Activated T-helper 1 cell treated with anti-CD3 and anti-CD28 coated beads, Interleukin-12 subunit alpha, Interleukin-12 subunit beta, Interleukin-2, Interleukin-4 antibody, amounts not matched to agents 30 ng/mL and 10 ng/mL and 1 ng/mL, durations not matched to agents 14 hours and 24 hours and 36 hours (primary cell): ENCODE measurements at regions of chr10 and their contacts with region 1.

Region 1: GRCh38 chr10:44878706-44879530 is 32.2 kb upstream of the TMEM72 start:
- DNase-seq: peak; percentile 78
- H3K4me3 Mint-ChIP-seq: peak overlapping the region; percentile 82
- H3K27ac Mint-ChIP-seq: peak overlapping the region; percentile 81
- H3K4me1 Mint-ChIP-seq: peaks cover 12% of the 10 kb centered on the region
- H3K27me3 Mint-ChIP-seq: peaks cover 16% of the 10 kb centered on the region

Region 2: DNA sequence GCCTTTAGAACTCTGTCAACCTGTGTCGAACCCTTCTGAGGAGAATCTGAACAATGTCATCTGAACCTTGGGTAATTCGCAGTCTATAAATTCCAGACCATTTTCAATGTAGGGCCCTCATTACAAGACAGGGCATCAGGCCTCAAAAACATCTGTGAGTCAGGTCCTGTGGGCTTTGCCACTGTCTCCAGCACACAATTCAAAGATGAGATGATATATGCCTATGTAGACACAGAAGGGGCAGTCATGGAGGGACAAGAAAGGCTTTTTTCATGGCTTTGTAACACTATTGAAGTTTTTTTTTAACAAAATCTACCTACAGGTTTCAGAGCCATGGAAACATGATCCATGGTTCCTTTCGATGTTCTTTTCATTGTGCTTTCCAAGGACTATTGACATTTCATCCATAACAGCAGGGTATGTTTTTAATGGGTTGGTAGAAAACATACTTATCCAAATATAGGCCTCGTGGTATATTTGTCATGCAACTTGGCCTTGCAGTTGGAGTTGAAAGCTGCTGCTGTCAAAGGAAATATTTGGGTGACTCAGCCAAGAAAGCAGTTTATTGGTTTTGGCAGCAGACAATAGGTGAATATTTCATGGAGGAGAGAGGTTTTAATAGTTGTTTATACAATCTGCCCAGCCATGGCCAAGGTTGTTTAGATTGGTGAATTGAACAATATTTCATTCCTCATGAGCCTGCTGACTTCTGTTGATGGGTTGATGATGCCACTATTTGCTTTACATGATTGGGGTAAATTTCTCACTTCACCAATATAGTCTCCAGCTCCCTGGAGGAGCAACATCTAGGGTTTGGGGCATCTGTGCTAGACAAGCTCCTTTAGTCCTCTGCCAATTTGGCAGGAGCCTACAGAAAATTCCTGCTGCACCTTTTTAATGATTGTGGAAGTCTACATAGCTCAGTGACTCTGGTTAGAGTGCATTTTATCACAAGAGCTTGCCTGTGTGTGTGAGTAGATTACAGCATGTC is 126.2 kb before region 1 on chr10:
- intact Hi-C with region 1: no loop called
- DNase-seq: no peak
- H3K4me3 Mint-ChIP-seq: no peak overlapping the region
- H3K27ac Mint-ChIP-seq: no peak overlapping the region
- H3K4me1 Mint-ChIP-seq: no peaks in the 10 kb centered on the region
- H3K27me3 Mint-ChIP-seq: no peaks in the 10 kb centered on the region

Region 3: GRCh38 chr10:44864637-44865288 is 14.2 kb before region 1 on chr10:
- intact Hi-C with region 1: loop called (anchors 1 kb)
- DNase-seq: peak; percentile 72
- H3K4me3 Mint-ChIP-seq: peak overlapping the region; percentile 89
- H3K27ac Mint-ChIP-seq: peak overlapping the region; percentile 54
- H3K4me1 Mint-ChIP-seq: peaks cover 17% of the 10 kb centered on the region
- H3K27me3 Mint-ChIP-seq: peaks cover 51% of the 10 kb centered on the region

Region 4: DNA sequence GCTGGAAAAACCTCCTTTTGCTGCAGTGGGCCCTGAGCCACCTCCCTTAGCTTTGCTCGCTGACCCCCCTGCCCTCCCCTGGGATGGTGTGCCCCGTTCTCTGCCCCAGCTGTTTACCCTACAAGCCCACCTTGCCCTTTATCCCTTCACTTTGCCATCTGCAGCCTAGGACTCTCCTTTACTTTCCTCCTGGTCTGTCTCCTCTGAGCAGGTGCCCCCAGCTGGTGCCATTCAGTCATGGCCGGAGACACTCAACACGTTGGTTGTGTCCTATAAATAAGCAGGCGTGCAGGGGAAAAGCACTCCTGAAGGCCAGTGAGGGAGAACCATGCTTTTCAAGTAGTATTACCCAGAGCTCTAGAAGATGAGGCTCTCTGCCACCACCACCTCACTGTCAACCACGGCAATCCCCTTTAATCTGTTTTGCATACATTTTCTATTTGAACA is 86.8 kb after region 1 on chr10:
- intact Hi-C with region 1: loop called (anchors 5 kb)
- DNase-seq: no peak
- H3K4me3 Mint-ChIP-seq: peak overlapping the region; percentile 4
- H3K27ac Mint-ChIP-seq: peak overlapping the region; percentile 63
- H3K4me1 Mint-ChIP-seq: peaks cover 49% of the 10 kb centered on the region
- H3K27me3 Mint-ChIP-seq: no peaks in the 10 kb centered on the region